ENCODE measurements at regions of chr10 and their contacts with region 1.

Region 1: GRCh38 chr10:110311357-110311949 is 6.7 kb upstream of the SMNDC1 start:
- DNase-seq: no peak
- ATAC-seq: peak; percentile 79

Region 2: DNA sequence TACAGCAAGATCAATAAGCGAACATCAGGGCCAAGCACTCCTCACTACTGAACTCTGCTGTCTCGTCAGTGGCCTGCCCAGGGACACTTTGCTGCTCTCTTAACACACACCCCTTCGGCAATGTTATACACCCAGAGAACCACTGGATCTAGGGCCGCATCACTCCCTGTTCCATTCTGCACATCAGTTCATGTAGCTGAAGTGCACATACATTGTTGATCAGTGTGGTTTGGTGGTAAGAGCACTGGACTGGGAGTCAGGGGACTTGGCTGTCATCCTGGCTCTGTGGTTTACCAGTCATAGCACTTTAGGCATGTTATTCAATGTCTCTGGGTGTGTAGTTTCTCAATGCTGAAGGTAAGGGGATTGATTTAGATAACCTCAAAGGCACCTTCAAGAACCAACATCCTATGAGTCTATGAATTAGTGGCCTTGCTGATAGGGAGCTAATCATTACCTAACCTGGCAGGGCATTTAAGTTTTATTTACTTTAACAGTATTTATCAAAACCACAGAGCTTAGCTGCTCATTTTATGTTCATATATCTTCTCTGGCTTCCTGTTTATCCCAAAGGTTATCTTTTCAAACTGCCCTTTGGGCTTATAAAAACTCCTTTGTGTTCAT is 211.0 kb after region 1 on chr10:
- intact Hi-C with region 1: no loop called
- DNase-seq: no peak
- ATAC-seq: no peak

Region 3: DNA sequence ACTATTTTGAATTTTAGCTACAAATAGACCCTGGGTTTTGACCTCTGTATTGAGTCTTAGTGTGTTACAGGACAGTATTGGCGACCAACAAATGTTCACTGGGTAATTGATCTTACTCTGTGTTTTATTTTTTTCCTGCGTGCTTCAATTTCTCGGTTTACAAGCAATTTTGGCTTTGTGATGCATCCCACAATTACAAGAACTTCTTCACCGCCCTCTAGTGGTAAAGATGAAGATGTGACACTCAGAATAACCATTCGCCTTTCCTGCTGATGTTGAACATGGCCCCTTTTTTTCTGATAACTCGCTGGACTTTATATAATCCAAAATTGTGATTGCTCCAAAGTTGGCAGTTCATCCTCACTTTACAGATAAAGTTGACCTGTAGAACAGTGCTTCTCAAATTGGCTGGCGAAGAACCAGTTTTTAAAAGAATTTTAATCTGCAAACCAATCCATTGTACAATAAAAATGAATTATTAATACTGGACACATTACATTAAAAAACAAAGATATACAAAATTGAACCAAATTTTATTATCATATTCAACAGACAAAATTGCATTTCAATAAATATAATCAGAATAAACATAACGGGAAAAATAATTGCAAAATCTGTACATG is 235.8 kb after region 1 on chr10:
- intact Hi-C with region 1: loop called (anchors 5 kb)
- DNase-seq: no peak
- ATAC-seq: peak; percentile 77

Measured in sciatic nerve (tissue), 2 donors.